ENCODE measurements at regions of chr6 and their contacts with region 1.

Region 1: GRCh38 chr6:135497412-135498269 is at the start of gene AHI1:
- DNase-seq: peak; percentile 85
- H3K4me3 Mint-ChIP-seq: no peak within 1 kb of the TSS
- H3K27ac Mint-ChIP-seq: no peak within 1 kb of the TSS
- H3K4me1 Mint-ChIP-seq: peaks cover 16% of the 10 kb centered on the region
- H3K27me3 Mint-ChIP-seq: no peaks in the 10 kb centered on the region
- total RNA-seq, gene AHI1: 17.8 to 18.8 TPM

Region 2: GRCh38 chr6:135054569-135055498 is 442.8 kb before region 1 on chr6 and contains the start of gene HBS1L:
- CTCF ChIA-PET with region 1: no interaction called
- intact Hi-C with region 1: loop called (anchors 1 kb)
- DNase-seq: peak; percentile 98
- H3K4me3 Mint-ChIP-seq: peak within 1 kb of the TSS; percentile 90
- H3K27ac Mint-ChIP-seq: peak within 1 kb of the TSS; percentile 96
- H3K4me1 Mint-ChIP-seq: peaks cover 23% of the 10 kb centered on the region
- H3K27me3 Mint-ChIP-seq: no peaks in the 10 kb centered on the region
- total RNA-seq, gene HBS1L: 150 to 153 TPM

Region 3: DNA sequence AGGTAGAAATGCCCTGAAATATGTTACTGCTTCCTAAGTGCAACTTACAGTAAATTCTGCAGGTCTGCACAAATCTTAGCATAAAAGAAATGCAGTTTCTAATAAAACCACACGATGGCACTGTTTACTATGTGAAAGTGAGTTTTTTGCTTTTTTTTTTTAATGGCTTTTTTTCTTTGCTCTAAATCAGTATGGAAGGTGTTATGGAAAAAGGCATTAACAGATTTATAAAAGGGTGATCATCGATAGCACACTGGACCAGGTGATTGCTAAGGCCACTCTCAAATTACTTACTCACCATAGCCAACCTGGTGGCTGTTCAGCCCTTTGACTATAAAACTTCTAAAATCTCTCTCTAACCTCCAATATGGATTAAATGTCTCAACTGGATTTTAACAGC is 45.9 kb before region 1 on chr6:
- CTCF ChIA-PET with region 1: no interaction called
- intact Hi-C with region 1: loop called (anchors 2 kb)
- DNase-seq: no peak
- H3K4me3 Mint-ChIP-seq: no peak overlapping the region
- H3K27ac Mint-ChIP-seq: no peak overlapping the region
- H3K4me1 Mint-ChIP-seq: no peaks in the 10 kb centered on the region
- H3K27me3 Mint-ChIP-seq: no peaks in the 10 kb centered on the region

Region 4: DNA sequence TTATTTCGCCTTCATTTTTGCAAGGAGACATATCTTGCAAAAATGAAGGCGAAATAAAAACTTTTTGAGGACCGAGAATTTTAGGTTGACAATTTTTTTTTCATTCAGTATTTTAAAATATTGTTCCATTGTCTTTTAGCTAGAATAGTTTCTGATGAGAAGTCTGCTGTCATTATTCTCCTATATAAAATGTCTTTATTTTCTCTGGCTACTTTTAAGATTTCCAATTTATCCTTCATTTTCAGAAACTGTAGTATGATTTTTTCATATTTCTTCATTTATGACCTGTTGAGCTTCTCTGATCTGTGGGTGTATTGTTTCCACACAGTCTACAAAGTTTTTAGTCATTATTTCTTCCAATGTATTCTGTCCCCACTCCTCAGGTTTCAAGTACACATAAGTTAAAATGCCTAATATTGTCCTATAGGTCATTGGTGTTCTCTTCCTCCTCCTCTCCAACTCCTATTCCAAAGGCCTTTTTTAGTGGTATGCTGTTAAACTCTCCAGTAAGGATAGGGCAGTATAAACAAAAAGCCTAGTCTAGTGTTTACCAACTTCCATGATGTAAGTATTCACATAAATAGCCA is 15.8 kb before region 1 on chr6:
- CTCF ChIA-PET with region 1: no interaction called
- intact Hi-C with region 1: no loop called
- DNase-seq: no peak
- H3K4me3 Mint-ChIP-seq: no peak overlapping the region
- H3K27ac Mint-ChIP-seq: no peak overlapping the region
- H3K4me1 Mint-ChIP-seq: no peaks in the 10 kb centered on the region
- H3K27me3 Mint-ChIP-seq: no peaks in the 10 kb centered on the region

Region 5: GRCh38 chr6:135880066-135880972 is 382.7 kb after region 1 on chr6:
- CTCF ChIA-PET with region 1: no interaction called
- intact Hi-C with region 1: loop called (anchors 2 kb)
- DNase-seq: peak; percentile 75
- H3K4me3 Mint-ChIP-seq: peak overlapping the region; percentile 77
- H3K27ac Mint-ChIP-seq: peak overlapping the region; percentile 98
- H3K4me1 Mint-ChIP-seq: peaks cover 64% of the 10 kb centered on the region
- H3K27me3 Mint-ChIP-seq: no peaks in the 10 kb centered on the region

Region 6: GRCh38 chr6:135901774-135902524 is 404.3 kb after region 1 on chr6:
- CTCF ChIA-PET with region 1: no interaction called
- intact Hi-C with region 1: loop called (anchors 5 kb)
- DNase-seq: peak; percentile 70
- H3K4me3 Mint-ChIP-seq: no peak overlapping the region
- H3K27ac Mint-ChIP-seq: peak overlapping the region; percentile 30
- H3K4me1 Mint-ChIP-seq: peaks cover 29% of the 10 kb centered on the region
- H3K27me3 Mint-ChIP-seq: no peaks in the 10 kb centered on the region

Region 7: DNA sequence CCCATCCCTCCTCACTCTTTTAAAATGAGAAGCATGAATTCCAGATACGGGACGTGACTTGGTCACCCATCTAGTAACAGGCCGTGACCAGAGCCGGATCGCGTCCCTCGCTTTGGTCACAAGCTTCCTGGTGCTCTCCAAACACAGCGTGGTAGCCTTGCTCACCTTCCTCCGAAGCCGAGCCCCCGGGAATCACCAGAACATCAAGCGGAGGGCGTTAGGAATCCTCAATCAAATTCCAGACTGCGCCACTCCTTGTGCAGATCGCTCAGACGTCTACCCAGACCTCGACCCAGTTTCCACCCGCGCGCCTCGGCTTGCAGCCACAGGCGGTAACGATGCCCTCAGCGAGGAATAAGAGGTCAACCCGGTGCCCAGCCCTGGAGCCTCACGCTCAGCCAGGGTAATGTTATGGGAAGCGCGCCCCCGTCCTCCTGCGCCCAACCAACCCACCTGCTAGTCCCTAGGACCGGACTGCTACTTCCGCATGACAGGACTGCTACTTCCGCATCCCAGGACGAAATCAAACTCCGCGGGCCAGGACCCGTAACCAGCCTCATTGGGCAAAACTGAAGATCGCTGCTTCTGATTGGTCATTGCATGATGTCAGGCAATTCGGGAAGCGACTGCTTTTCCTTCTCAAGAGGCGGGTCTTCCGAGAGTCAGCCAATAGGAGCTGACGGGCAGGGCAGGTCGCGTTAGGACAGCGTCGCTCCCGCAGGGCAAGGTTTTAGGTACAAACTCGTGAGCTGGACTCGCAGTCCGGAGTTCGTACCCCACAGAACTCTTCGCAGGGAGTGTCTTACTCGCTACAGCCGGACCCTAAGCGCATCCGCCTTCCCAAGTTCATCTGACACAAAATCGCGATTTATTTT is 752.4 kb after region 1 on chr6 and contains the start of gene MTFR2:
- CTCF ChIA-PET with region 1: no interaction called
- intact Hi-C with region 1: loop called (anchors 1 kb)
- DNase-seq: peak; percentile 97
- H3K4me3 Mint-ChIP-seq: peak within 1 kb of the TSS; percentile 95
- H3K27ac Mint-ChIP-seq: peak within 1 kb of the TSS; percentile 85
- H3K4me1 Mint-ChIP-seq: peaks cover 45% of the 10 kb centered on the region
- H3K27me3 Mint-ChIP-seq: no peaks in the 10 kb centered on the region
- total RNA-seq, gene MTFR2: 19.2 to 22.1 TPM

Measured in activated naive CD4-positive, alpha-beta T cell treated with anti-CD3 and anti-CD28 coated beads for 36 hours (primary cell).